Motor neuron (in vitro differentiated cells): ENCODE measurements at regions of chr3 and their contacts with region 1.

Region 1: GRCh38 chr3:192597533-192598302 is 129.6 kb downstream of the FGF12 start:
- ATAC-seq: peak in 4 of 8 experiments; percentile 47 to 79 (median 68)
- H3K4me3 ChIP-seq: no peak overlapping the region
- H3K27ac ChIP-seq: no peak overlapping the region
- H3K4me1 ChIP-seq: no peaks in the 10 kb centered on the region

Region 2: DNA sequence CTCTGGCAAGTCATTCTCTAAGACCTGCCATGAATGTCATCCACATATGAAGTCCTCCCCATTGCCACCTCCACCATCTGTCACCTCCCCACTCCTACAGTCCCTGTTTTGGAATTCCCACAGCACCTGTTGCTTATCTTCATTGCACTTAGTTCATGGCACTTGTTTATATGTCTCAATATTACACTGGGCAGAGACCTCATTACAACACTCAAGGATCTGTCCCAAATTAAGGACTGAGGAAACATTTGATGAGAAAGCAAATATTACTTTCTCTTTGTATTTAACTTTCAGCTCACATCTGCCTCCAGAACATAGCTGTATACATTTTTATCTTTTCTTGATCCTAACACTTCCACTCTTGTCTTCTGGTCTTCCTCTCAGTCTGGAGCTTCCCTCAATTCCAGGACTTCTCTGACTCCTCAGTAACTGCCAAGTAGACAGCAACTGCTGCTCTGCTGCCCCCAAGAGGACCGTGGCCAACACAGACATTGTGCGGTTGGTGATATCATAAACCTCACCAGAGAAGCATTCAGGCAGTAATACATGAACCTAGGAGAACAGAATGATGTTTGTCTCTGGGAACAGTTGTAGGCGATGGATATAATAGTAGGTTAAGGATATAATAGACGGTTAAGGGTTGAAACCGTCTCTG is 174.6 kb after region 1 on chr3:
- in situ Hi-C with region 1: no loop called
- ATAC-seq: peak in 4 of 8 experiments; percentile 52 to 100 (median 100)
- H3K4me3 ChIP-seq: no peak overlapping the region
- H3K27ac ChIP-seq: no peak overlapping the region
- H3K4me1 ChIP-seq: no peaks in the 10 kb centered on the region

Region 3: DNA sequence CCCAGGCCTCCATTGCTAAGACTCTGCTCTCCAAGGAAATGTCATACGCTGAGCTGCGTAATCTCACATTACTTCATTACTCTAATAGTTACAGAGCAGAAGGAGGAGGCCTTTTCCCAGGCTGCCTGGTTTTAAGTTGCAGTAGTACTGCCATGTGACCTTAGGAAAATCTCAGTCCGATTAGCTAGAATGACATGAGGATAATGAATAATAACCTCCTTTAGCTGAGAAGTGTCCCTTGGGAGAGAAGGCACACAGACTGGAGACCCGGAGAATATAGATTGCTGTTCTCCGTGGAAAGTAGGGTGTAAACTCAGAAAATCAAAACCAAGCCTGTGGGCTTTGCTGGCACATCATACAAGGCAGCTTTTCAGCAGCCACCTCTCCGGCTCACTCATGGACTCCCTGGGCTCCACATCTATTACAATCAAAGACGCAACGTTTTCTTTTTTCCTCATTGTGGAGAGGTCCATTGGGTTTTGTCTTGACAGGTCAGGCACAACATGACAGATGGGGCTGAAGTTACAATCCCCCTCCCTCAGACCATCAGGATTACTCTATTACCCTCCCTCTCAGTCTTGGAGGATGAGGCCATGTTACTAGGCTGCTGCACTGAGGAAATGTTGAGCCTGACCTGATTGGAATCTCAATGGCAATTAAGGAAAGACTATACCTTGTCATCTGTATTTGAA is 454.8 kb after region 1 on chr3:
- in situ Hi-C with region 1: loop called in 1 of 9 experiments (anchors 25 kb)
- ATAC-seq: peak in 5 of 8 experiments; percentile 55 to 86 (median 79)
- H3K4me3 ChIP-seq: no peak overlapping the region
- H3K27ac ChIP-seq: peak overlapping the region; percentile 33 to 70
- H3K4me1 ChIP-seq: peaks cover 23 to 58% of the 10 kb centered on the region in 2 donors